ENCODE measurements at regions of chr10 and their contacts with region 1.

Region 1: GRCh38 chr10:89217057-89217990 is 10.2 kb upstream of the CH25H start:
- DNase-seq: peak; percentile 80
- H3K4me3 ChIP-seq: no peak overlapping the region
- H3K27ac ChIP-seq: no peak overlapping the region
- H3K4me1 ChIP-seq: peaks cover 9% of the 10 kb centered on the region
- H3K27me3 ChIP-seq: no peaks in the 10 kb centered on the region
- CTCF ChIP-seq: peak; percentile 47 to 51
- POLR2A ChIP-seq: no peak

Region 2: DNA sequence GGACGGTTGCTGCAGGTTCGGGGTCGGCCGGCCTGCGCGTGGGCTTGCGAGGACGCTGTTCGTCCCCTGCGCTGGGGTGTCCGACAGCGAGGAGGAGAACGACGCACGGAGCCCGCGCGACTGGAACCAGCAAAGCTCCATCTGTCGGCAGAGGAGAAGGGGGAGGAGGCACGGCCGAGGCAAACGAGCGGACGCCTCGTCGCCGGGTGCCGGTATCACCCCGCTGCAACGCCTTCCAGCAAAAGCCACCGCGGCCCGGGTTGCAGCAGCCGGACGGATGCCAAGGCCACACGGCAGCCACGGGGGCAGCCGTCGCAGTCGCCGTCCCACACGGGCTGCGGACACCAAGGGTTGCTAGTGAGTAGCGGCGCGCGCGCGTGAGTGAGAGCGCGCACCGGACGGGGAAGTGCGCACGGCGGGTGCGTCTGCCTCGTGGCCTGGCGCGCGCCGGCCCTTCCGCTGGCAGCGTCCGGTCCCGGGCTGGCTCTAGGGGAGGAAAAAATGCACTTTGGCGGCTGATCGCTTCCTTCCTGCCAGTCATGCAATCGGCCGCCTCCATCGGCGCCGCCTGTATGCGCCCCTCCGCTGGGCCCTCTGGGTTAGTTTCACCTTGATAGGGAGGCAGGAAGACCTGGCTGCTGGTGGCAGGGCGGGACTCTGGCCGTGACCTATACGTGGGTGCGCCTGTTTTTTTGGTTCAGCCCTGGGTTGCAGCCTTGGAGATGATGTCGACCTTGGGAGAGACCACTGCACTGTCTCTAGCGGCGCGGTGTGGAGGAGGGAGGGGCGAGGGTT is 336.8 kb before region 1 on chr10:
- CTCF ChIA-PET with region 1: interaction called, 4 read pairs
- POLR2A ChIA-PET with region 1: no interaction called
- dilution Hi-C with region 1: no loop called
- intact Hi-C with region 1: loop called (anchors 5 kb)
- DNase-seq: peak; percentile 82
- H3K4me3 ChIP-seq: peak overlapping the region; percentile 30 to 55 (median 55)
- H3K27ac ChIP-seq: peak overlapping the region; percentile 84
- H3K4me1 ChIP-seq: peaks cover 30% of the 10 kb centered on the region
- H3K27me3 ChIP-seq: no peaks in the 10 kb centered on the region
- CTCF ChIP-seq: peak; percentile 5 to 28
- POLR2A ChIP-seq: peak; percentile 83

Region 3: DNA sequence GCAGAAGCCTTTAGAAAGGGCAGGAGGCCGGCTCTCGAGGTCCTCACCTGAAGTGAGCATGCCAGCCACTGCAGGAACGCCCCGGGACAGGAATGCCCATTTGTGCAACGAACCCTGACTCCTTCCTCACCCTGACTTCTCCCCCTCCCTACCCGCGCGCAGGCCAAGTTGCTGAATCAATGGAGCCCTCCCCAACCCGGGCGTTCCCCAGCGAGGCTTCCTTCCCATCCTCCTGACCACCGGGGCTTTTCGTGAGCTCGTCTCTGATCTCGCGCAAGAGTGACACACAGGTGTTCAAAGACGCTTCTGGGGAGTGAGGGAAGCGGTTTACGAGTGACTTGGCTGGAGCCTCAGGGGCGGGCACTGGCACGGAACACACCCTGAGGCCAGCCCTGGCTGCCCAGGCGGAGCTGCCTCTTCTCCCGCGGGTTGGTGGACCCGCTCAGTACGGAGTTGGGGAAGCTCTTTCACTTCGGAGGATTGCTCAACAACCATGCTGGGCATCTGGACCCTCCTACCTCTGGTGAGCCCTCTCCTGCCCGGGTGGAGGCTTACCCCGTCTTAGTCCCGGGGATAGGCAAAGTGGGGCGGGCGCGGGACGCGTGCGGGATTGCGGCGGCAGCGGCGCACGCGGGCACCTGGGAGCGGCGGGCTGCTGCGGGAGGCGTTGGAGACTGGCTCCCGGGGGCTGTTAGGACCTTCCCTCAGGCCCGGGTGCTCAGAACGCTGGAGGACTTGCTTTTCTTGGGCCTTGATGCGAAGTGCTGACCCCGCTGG is 226.8 kb before region 1 on chr10 and contains the start of gene FAS:
- CTCF ChIA-PET with region 1: interaction called, 35 read pairs
- POLR2A ChIA-PET with region 1: no interaction called
- dilution Hi-C with region 1: loop called (anchors 25 kb)
- intact Hi-C with region 1: loop called (anchors 1 kb)
- DNase-seq: peak; percentile 53
- H3K4me3 ChIP-seq: peak within 1 kb of the TSS; percentile 76 to 84 (median 84)
- H3K27ac ChIP-seq: peak within 1 kb of the TSS; percentile 6
- H3K4me1 ChIP-seq: peaks cover 12% of the 10 kb centered on the region
- H3K27me3 ChIP-seq: peaks cover 11 to 22% of the 10 kb centered on the region in 2 experiments
- CTCF ChIP-seq: no peak
- POLR2A ChIP-seq: no peak
- total RNA-seq, gene FAS: 6.0 and 6.1 TPM in 2 replicates

Region 4: GRCh38 chr10:89003344-89003743 is 214.0 kb before region 1 on chr10:
- CTCF ChIA-PET with region 1: interaction called, 10 read pairs
- POLR2A ChIA-PET with region 1: no interaction called
- dilution Hi-C with region 1: loop called (anchors 25 kb)
- intact Hi-C with region 1: no loop called
- DNase-seq: peak; percentile 74
- H3K4me3 ChIP-seq: no peak overlapping the region
- H3K27ac ChIP-seq: no peak overlapping the region
- H3K4me1 ChIP-seq: peaks cover 14% of the 10 kb centered on the region
- H3K27me3 ChIP-seq: peaks cover 0 to 5% of the 10 kb centered on the region in 2 experiments
- CTCF ChIP-seq: no peak
- POLR2A ChIP-seq: no peak

Region 5: DNA sequence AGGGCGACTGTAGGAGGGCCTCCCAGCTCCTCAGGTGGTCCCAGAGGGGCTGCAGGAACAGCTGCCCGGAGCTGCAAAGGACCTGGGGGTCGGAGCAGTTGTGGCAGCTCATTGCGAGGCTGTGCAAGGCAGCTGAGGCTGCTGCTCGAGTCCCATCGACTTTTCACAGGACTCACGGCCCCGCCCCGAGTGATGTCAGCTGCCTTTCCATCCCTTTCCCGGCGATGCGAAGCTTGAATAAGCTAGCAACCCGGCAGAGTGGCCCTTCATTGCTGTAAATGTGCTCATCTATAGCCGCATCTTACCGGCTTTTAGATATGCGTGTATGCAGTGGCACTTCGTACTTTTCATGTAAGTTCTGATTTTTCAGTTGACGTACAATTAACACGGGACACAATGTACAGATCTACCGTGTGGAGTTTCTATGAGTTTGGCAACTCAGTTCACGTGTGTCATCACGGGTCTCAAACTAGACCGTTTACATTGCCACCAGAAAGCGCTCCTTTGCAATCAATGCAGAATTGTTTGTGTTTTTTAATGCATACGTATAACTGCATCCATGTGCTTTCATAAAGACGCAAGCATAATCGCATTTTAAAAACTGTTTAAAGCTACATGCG is 10.0 kb before region 1 on chr10 and contains the start of gene CH25H:
- CTCF ChIA-PET with region 1: interaction called, 30 read pairs
- POLR2A ChIA-PET with region 1: no interaction called
- dilution Hi-C with region 1: no loop called
- intact Hi-C with region 1: no loop called
- DNase-seq: peak; percentile 76
- H3K4me3 ChIP-seq: peak within 1 kb of the TSS; percentile 34 to 84 (median 49)
- H3K27ac ChIP-seq: peak within 1 kb of the TSS; percentile 7
- H3K4me1 ChIP-seq: peaks cover 23% of the 10 kb centered on the region
- H3K27me3 ChIP-seq: peaks cover 16 to 27% of the 10 kb centered on the region in 2 experiments
- CTCF ChIP-seq: no peak
- POLR2A ChIP-seq: no peak
- total RNA-seq, gene CH25H: 0.32 TPM in 1 of 2 replicates, not detected in the other

Region 6: DNA sequence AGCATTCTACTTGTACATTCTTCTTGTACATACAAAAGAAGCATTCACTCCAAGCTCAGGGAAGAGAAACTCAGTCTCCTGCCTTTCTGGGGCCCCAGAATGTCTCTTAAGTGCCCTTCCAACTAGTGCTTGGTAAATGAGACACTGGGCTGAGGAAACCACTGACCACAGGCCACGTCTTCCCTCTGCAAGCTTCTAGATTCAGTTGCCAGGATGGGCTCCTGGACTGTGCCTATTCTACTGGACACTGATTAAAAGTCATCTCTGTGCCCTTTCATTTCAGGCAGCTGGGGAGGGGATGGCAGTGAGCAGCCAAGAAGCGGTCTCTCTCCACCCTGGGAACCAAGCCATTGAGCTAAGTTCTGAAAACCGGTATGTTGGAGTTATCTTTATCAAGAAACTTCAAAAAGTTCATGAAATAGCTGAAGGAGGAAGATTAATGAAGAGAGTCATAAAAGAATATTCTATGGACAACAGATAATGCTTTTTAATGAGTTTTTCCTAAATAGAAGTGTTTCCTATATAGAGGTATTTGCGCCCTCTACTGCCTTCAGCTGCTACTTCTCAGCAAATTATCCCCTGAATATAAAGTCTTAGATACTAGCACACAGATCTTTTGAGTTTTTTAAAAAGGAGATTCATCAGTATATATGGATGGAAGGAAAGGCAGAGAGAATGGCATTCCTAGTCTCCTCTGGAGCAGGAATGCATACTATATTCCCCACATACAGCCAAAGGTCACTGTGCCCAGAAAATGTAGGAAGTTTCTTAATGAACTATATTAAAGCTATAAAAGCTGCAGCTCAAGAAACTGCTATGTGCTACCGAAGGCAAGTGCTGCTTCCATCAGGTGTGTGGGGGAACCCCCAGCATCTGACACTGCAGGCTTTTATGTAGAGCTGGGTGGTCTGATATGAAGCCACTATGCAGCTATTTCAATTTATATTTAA is 152.1 kb after region 1 on chr10:
- CTCF ChIA-PET with region 1: interaction called, 16 read pairs
- POLR2A ChIA-PET with region 1: no interaction called
- dilution Hi-C with region 1: no loop called
- intact Hi-C with region 1: no loop called
- DNase-seq: peak; percentile 61
- H3K4me3 ChIP-seq: no peak overlapping the region
- H3K27ac ChIP-seq: no peak overlapping the region
- H3K4me1 ChIP-seq: peaks cover 6% of the 10 kb centered on the region
- H3K27me3 ChIP-seq: peaks cover 4 to 8% of the 10 kb centered on the region in 2 experiments
- CTCF ChIP-seq: peak; percentile 43 to 52
- POLR2A ChIP-seq: no peak